GM10248 (cell line): ENCODE measurements at regions of chr19 and their contacts with region 1.

Region 1: GRCh38 chr19:17511724-17512573 is 500 bp downstream of the PGLS start:
- DNase-seq: peak; percentile 90
- CTCF ChIP-seq: peak; percentile 61

Region 2: DNA sequence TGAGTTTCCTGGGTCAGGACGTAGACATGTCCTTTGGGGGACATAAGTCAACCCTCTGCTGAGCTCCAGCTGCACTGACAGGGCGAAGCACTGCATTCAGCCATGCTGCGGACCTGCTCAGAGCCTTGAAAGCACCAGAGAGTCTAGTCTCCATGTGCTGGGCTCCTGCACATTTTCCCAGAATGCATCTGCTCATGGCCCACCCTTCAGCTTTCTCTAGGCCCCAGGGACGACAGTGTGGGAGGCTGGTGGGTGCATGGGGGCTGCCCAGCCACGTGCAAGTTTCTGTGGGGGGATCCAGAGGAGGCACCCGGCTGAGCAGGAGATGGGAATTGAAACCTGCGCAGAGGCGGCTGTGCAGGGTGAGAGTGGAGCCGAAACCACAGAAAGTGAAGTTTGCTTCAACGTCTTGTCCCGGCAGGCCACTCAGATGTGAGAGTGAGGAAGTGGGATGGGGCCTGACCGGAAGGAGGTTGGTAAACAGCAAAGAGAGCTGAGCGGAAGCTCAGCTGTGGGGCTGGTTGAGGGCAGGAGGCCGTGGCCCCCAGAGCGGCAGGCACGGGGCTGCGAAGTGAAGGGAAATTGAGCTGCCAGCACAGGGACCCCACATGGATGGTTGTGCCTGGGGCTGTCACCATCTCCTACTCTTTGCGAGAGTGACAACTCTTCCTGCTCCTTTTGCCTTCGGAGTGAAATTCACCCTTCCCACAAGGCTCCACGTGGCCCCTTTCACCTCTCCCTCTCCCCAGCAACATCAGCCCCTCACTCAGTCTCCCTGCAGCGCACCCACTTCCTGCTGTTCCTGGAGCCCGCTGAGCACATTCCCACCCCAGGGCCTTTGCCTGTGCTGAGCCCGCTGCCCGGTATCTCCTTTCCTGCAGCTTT is 11.3 kb after region 1 on chr19:
- CTCF ChIA-PET with region 1: interaction called, 18 read pairs
- POLR2A ChIA-PET with region 1: interaction called, 7 read pairs
- DNase-seq: peak; percentile 87
- CTCF ChIP-seq: no peak